GM10248 (cell line): ENCODE measurements at regions of chr22 and their contacts with region 1.

Region 1: DNA sequence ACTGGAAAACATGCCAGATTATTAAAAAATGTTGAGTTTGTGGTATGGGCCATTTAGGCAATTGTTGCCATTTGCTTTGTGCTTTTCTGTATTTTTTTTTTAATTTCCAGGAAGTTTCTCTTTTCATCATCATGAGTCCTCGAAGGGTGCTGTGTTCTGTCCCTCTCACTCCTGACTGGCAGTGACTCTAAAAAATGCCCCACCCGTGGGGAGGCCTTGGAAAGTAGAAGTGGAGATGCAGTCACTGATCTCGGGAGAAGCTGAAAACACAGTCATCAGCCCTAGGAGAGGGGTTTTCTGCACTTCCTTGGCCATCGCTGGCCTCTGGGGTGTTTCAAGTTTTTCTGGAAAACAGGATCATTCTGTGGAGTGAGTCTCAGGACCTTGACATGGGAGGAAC is 98.5 kb upstream of the GRK3 start:
- DNase-seq: no peak
- CTCF ChIP-seq: no peak

Region 2: GRCh38 chr22:25447686-25448434 is 18.1 kb before region 1 on chr22:
- CTCF ChIA-PET with region 1: interaction called, 16 read pairs
- POLR2A ChIA-PET with region 1: no interaction called
- DNase-seq: peak; percentile 95
- CTCF ChIP-seq: peak; percentile 99

Region 3: DNA sequence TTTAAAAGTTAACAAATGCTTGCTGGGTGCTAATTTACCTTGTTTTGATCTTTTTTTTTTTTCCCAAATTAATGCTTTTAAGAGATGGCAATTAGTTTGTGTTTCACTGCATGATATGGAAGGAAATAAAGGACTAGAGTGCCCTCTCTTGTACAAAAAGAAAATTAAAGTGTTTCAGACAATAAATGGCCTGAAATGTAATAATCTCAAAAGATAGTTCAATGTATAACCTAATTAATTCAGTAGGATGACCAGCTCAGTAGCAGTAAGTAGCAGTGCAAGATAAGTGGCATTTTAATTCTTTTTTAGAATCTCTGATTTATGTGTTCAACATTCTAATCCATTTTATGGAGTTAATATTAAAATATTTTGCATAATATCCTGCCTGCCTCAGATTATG is 236.1 kb after region 1 on chr22:
- CTCF ChIA-PET with region 1: interaction called, 15 read pairs
- POLR2A ChIA-PET with region 1: no interaction called
- DNase-seq: peak; percentile 31
- CTCF ChIP-seq: peak; percentile 38

Region 4: DNA sequence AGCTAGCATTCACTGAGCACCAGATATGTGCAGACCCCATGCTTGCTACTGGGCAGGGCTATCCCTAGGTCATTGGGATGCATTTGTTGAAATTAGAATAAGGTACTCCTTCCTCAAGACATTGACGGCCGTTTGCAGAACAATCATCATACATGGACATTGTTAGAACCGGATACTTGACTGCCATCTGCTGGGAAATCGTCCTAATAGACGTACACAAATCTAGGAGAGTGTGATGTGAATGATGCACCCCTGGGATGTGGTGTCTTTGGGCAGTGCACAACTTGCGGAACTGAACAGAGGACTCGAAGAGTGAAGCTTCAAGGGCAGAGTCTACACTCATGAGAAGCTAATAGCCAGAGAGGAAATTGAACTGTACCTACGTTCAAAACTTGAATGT is 311.9 kb after region 1 on chr22:
- CTCF ChIA-PET with region 1: interaction called, 60 read pairs
- POLR2A ChIA-PET with region 1: no interaction called
- DNase-seq: peak; percentile 51
- CTCF ChIP-seq: peak; percentile 28